ENCODE measurements at regions of chr7 and their contacts with region 1.

Region 1: GRCh38 chr7:44681645-44682044 is 67.0 kb upstream of the ZMIZ2 start:
- DNase-seq: no peak
- ATAC-seq: no peak
- H3K4me3 ChIP-seq: no peak overlapping the region
- H3K27ac ChIP-seq: no peak overlapping the region
- H3K4me1 ChIP-seq: no peaks in the 10 kb centered on the region
- H3K27me3 ChIP-seq: no peaks in the 10 kb centered on the region
- CTCF ChIP-seq: no peak

Region 2: DNA sequence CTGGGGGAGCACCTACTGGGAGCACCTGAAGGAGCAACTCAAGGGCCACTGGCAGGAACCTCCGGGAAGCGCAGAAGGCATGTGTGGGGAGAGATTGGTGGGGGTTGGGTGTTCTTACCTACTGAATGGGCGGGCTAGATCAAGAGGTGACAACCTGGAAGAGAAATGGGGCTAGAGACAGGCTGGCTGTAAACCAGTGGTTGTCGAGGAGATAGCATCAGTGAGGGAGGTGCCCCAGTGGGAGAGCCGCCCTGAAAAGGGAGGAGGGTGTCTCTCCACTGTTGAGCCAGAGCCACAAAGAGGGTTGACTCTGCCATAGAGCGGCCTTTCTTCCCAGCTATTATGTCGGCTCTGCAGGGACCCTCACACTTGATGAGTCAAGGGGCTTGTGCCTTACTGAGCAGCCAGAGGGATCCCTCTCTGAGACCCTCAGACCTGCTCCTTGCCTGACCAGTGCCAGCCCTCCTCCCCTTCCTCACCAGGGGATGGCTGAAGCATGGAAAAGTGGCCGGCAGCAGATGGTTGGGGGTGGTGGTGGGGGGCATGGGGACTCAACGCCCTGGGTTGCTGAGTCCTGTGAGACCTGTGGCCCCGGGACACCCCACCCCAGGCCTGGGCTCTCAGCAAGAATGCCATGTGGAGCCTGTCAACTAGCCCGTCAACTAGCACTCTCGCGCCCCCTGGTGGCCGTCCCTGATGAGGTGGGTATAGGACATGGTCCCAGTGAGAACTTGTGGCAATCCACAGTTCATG is 240.1 kb after region 1 on chr7:
- CTCF ChIA-PET with region 1: no interaction called
- POLR2A ChIA-PET with region 1: no interaction called
- intact Hi-C with region 1: no loop called
- DNase-seq: peak; percentile 78
- ATAC-seq: peak; percentile 97
- H3K4me3 ChIP-seq: no peak overlapping the region
- H3K27ac ChIP-seq: no peak overlapping the region
- H3K4me1 ChIP-seq: no peaks in the 10 kb centered on the region
- H3K27me3 ChIP-seq: no peaks in the 10 kb centered on the region
- CTCF ChIP-seq: peak; percentile 86

Region 3: DNA sequence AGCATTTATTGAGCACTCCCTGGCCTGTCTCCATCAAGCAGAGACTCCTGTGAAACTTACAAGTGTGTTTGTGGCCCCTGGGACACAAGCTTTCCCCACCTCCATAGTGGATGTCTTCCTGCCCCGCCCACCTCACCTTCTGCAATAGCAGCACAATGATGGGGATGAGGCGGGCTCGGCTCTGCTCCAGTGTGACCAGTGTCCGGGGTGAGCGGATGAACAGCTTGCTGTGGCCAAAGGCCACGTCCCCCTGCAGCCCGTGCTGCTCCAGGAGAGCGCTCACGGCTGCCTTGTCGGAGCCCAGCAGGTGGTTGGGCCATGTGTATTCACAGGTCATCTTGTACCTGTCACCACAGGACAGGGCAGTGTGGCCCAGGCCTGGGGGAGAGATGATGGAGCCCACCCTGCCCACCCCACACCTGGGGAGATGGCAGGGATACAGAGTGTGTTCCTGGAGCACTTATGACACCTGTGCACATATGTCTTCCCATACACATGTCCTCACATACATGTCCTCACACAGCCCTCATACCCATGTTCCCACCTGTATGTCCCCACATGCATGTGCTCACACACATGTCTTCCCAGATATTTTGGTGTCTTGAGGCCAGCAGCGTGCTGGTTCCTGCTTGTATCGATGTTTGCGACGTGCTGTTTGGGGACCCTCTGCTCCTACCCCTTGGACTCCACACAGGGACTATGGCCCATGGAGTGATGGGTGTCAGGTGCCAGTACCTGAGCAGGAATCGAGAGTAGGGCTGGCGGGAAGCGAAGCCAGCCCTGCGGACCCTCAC is 284.5 kb after region 1 on chr7:
- CTCF ChIA-PET with region 1: interaction called, 11 read pairs
- POLR2A ChIA-PET with region 1: no interaction called
- intact Hi-C with region 1: no loop called
- DNase-seq: no peak
- ATAC-seq: no peak
- H3K4me3 ChIP-seq: no peak overlapping the region
- H3K27ac ChIP-seq: no peak overlapping the region
- H3K4me1 ChIP-seq: no peaks in the 10 kb centered on the region
- H3K27me3 ChIP-seq: no peaks in the 10 kb centered on the region
- CTCF ChIP-seq: no peak

Measured in PC-3 (cell line).